RWPE1 (cell line): ENCODE measurements at regions of chr5 and their contacts with region 1.

Region 1: DNA sequence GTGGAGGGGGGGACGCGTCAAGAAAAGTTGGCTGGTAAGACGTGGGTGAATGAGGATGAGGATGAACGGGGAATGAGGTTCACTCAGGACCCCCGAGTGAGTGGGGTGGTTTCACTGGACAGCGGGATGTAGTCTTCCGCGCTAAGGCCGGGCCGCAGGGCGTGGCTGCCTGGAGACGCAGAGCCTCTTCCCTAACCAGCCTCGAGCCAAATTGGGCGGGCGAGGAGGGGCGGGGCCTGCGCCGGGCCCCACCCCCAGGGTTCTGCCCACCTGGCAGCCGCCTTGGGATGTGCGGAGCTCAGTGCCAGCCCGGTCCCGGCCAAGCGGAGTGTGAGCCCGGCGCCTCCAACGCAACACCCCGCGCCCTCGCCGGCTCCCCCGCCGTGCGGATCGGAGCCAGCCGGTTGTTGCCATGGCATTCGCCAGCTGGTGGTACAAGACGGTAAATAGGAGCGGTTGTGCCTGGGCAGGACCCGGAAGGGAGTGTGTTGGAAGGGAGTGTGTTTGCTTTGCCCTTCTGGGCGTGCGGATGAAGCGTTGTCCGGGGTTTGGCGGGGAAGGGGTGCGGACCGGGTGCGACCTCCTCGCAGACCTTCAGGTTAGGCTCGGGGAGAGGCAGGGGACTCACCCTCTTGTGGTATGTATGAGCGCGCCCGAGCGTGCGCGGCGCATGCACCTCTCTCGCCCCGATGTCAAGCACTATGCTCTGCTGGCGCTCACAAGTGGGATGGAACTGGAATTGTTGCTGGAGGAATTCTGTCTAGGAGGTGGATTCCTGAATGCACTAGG is 743 bp downstream of the CAST start:
- DNase-seq: peak; percentile 98
- H3K27ac ChIP-seq: peak overlapping the region; percentile 100
- CTCF ChIP-seq: no peak

Region 2: DNA sequence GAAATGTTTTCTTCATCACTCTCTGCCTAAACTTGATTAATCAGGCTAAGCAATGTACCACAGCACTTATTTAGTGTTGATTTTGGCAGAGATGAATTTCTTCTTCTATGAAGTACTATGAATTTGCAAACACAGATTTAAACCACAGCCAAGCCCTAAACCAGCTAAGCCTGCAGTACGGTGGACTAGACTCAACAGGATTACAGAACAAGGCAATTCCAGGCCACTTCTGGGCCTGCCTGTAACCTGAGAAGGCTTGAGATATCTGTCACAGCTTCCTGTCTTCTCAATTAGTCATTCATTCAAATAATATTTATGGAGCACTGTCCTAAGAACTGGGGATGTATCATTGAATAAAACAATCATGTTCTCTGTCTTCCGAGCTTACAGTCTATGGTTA is 33.1 kb before region 1 on chr5:
- CTCF ChIA-PET with region 1: no interaction called
- POLR2A ChIA-PET with region 1: interaction called, 12 read pairs
- DNase-seq: peak; percentile 91
- H3K27ac ChIP-seq: no peak overlapping the region
- CTCF ChIP-seq: no peak

Region 3: DNA sequence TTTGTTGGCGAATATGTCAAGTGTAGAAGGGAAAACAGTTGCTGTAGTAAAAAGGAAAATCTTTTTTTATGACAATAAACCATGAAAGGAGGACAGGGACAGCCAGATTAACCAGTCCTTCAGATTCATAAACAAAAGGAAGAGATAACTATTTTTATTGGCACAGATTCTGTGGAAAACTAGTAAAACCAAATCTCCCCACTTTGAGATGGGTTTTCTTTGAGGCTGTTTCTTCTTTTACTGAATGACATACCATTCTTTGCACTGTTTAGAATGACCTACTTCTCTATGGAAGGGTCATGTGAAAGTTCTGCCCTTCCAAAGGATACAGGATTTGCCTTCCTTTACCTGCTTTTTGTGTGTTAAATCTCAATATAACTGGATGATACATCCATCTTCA is 13.0 kb after region 1 on chr5:
- CTCF ChIA-PET with region 1: no interaction called
- POLR2A ChIA-PET with region 1: no interaction called
- DNase-seq: no peak
- H3K27ac ChIP-seq: no peak overlapping the region
- CTCF ChIP-seq: no peak